Right lobe of liver (tissue), 6 donors: ENCODE measurements at regions of chr16 and their contacts with region 1.

Region 1: DNA sequence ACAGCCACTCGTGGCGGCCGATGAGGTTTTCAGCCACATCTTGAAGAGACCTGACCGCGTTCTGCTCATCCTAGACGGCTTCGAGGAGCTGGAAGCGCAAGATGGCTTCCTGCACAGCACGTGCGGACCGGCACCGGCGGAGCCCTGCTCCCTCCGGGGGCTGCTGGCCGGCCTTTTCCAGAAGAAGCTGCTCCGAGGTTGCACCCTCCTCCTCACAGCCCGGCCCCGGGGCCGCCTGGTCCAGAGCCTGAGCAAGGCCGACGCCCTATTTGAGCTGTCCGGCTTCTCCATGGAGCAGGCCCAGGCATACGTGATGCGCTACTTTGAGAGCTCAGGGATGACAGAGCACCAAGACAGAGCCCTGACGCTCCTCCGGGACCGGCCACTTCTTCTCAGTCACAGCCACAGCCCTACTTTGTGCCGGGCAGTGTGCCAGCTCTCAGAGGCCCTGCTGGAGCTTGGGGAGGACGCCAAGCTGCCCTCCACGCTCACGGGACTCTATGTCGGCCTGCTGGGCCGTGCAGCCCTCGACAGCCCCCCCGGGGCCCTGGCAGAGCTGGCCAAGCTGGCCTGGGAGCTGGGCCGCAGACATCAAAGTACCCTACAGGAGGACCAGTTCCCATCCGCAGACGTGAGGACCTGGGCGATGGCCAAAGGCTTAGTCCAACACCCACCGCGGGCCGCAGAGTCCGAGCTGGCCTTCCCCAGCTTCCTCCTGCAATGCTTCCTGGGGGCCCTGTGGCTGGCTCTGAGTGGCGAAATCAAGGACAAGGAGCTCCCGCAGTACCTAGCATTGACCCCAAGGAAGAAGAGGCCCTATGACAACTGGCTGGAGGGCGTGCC is 30.1 kb downstream of the CIITA start:
- DNase-seq: no peak
- ATAC-seq: peak in 1 of 4 donors; percentile 18
- H3K4me3 ChIP-seq: no peak overlapping the region
- H3K27ac ChIP-seq: no peak overlapping the region
- H3K4me1 ChIP-seq: no peaks in the 10 kb centered on the region
- H3K27me3 ChIP-seq: no peaks in the 10 kb centered on the region
- CTCF ChIP-seq: no peak
- POLR2A ChIP-seq: no peak

Region 2: GRCh38 chr16:10752843-10753523 is 154.2 kb before region 1 on chr16:
- intact Hi-C with region 1: loop called in 1 of 2 experiments (anchors 10 kb)
- DNase-seq: peak in 1 of 3 donors; percentile 49
- ATAC-seq: peak; percentile 36 to 73 (median 61)
- H3K4me3 ChIP-seq: no peak overlapping the region
- H3K27ac ChIP-seq: no peak overlapping the region
- H3K4me1 ChIP-seq: no peaks in the 10 kb centered on the region
- H3K27me3 ChIP-seq: no peaks in the 10 kb centered on the region
- CTCF ChIP-seq: no peak
- POLR2A ChIP-seq: no peak

Region 3: DNA sequence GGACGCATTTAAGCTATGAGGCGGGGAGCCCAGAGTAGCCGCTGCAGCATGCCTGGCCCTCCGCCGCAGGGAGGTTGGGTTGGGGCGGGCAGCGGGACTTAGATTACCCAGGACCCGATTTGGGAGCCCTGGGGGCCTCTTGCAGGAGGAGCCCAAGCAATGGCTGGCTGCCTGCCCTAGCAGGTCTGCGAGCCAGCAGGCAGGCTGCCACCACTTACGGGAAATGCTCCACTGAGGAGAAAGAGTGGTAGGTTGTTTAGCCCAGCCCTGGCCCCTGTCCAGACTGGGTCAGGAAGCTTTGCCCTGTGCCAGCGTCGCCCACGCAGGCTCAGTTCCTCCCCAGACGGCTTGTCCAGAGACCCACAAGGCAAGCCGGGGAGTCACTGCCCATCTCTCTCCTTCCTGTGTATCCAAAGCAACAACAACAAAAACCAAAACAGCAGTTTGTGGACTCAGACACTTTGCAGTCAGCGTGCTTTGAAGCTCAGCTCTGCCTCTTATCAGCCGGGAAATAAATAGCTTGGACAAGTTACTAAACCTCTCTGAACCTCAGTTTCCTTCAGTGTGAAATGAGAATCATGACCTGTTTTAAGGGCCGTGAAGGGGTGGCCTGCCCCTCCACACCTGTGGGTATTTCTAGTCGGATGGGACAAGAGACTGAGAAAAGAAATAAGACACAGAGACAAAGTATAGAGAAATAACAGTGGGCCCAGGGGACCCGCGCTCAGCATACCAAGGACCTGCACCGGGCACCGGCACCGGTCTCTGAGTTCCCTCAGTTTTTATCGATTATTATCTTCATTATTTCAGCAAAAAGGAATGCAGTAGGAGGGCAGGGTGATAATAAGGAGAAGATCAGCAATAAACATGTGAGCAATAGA is 78.0 kb before region 1 on chr16:
- intact Hi-C with region 1: no loop called
- DNase-seq: peak; percentile 94
- ATAC-seq: peak; percentile 71 to 79 (median 77)
- H3K4me3 ChIP-seq: no peak overlapping the region
- H3K27ac ChIP-seq: peak overlapping the region; percentile 41 to 80 (median 75)
- H3K4me1 ChIP-seq: peaks cover 0 to 40% (median 18%) of the 10 kb centered on the region in 4 donors
- H3K27me3 ChIP-seq: no peaks in the 10 kb centered on the region
- CTCF ChIP-seq: no peak
- POLR2A ChIP-seq: no peak

Region 4: GRCh38 chr16:10944249-10945064 is 37.3 kb after region 1 on chr16 and contains the start of gene CLEC16A:
- intact Hi-C with region 1: no loop called
- DNase-seq: peak; percentile 99
- ATAC-seq: peak; percentile 76 to 85 (median 82)
- H3K4me3 ChIP-seq: peak within 1 kb of the TSS; percentile 82 to 92 (median 84)
- H3K27ac ChIP-seq: peak within 1 kb of the TSS; percentile 65 to 77 (median 71)
- H3K4me1 ChIP-seq: peaks cover 0 to 42% (median 9%) of the 10 kb centered on the region in 4 donors
- H3K27me3 ChIP-seq: no peaks in the 10 kb centered on the region
- CTCF ChIP-seq: peak in 1 of 4 donors; percentile 22
- POLR2A ChIP-seq: peak; percentile 84
- total RNA-seq, gene CLEC16A: 15.2 to 25.9 (median 19.8) TPM

Region 5: DNA sequence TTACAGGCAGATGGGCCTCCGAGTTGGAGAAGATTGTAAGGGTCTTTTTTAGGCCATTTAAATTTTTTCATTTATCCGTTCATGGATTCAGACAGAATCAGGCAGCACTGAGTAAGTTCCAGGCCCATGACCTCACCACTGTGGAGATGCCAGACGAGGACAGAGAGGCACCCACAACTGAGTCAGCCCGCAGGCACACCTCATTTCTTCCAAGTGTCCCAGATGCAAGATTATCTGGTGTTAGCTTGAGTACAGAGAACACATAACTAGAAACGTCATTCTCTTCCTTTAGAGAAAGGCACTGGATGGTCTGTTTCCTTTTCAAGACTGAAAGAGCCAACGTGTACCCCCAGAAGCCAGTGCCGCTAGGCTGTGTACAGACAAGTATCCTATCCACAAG is 54.1 kb after region 1 on chr16:
- intact Hi-C with region 1: no loop called
- DNase-seq: no peak
- ATAC-seq: no peak
- H3K4me3 ChIP-seq: no peak overlapping the region
- H3K27ac ChIP-seq: no peak overlapping the region
- H3K4me1 ChIP-seq: peaks cover 0 to 18% (median 0%) of the 10 kb centered on the region in 4 donors
- H3K27me3 ChIP-seq: no peaks in the 10 kb centered on the region
- CTCF ChIP-seq: no peak
- POLR2A ChIP-seq: no peak

Region 6: GRCh38 chr16:11105038-11105903 is 198.1 kb after region 1 on chr16:
- intact Hi-C with region 1: no loop called
- DNase-seq: no peak
- ATAC-seq: peak; percentile 70 to 88 (median 74)
- H3K4me3 ChIP-seq: no peak overlapping the region
- H3K27ac ChIP-seq: peak overlapping the region; percentile 20 to 61 (median 36)
- H3K4me1 ChIP-seq: peaks cover 0 to 35% (median 7%) of the 10 kb centered on the region in 4 donors
- H3K27me3 ChIP-seq: no peaks in the 10 kb centered on the region
- CTCF ChIP-seq: no peak
- POLR2A ChIP-seq: peak; percentile 39